SK-MEL-5 (cell line): ENCODE measurements at regions of chr11 and their contacts with region 1.

Region 1: DNA sequence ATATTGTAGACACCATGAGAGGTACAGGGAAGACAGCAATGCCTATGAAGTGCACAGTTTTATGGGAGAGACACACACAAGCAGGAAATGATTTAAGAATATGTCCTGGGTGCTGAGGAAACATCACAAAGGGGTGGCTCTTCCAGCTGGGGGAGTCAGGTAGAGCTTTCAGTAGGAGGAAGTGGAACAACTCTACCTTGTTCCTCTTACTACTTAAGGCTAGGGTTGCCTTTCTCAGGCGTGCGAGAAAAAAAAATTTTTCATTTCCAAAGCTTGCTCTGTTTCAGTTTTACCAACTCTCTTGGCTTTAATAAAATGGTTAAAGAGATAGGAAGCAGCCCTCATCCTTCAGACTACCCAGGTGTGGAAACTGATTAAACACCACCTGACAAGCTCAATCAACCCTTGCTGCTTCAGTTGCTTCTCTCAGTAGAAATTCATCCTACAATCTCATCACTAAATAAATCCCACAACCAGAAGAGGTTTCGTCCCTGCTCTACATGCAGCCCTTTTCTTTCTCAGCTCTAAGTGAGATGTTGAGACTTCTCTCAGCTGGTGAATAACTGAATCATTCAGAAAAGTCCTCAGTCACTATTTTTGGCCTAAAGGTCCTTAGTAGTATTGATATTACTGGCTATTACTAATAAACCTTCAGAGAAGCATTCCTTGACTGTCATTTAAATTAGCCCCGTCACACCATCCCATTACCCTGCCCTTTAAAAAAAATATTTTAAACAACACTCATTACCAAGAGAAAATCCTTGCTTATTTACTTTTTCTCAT is 5.9 kb downstream of the ABTB2 start:
- DNase-seq: no peak

Region 2: DNA sequence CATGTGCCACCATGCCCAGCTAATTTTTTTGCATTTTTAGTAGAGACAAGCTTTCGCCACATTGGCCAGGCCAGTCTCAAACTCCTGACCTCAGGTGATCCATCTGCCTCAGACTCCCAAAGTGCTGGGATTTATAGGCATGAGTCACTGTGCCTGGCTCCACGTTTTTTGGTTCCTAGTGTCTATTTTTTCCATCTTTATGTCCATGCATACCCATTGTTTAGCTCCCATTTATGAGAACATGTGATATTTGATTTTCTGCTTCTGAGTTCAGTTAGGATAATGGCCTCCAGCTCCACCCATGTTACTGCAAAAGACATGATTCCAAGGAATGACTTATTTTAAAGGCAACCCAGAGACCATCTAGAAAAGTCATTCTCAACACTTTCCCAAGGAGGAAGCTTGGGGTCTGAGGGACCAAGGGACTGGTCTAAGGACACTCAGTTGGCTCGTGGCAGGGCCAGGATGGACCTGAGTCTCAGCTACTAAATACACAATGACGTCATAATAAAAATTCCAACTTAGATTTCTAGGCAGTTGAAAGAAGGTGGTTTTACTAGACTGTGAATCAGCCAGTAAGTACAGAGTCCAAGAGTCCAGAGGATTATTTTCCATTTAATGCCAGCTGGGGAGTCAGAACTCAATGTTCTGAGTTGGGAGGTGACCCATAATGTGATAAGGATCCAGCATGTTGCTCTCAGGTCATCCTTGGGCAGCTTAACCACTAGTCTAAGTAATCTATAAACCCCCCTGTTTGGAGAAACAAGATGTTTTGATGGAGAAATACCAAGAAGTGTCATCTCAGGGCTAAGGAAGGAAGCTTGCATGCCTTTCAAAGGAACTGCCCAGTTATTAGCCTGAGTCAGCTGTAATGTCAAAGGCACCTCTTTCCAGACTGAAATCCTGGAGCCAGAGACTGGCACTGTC is 33.5 kb before region 1 on chr11:
- in situ Hi-C with region 1: loop called (anchors 5 kb)
- DNase-seq: no peak

Region 3: GRCh38 chr11:34492806-34493414 is 141.0 kb after region 1 on chr11:
- in situ Hi-C with region 1: no loop called
- DNase-seq: peak; percentile 81